Caco-2 (cell line): ENCODE measurements at regions of chr12 and their contacts with region 1.

Region 1: GRCh38 chr12:42744539-42745156 is 155.1 kb upstream of the PRICKLE1 start:
- DNase-seq: peak; percentile 43 to 64
- H3K4me3 ChIP-seq: no peak overlapping the region
- H3K4me3 Mint-ChIP-seq: no peak overlapping the region
- H3K27ac Mint-ChIP-seq: no peak overlapping the region
- H3K4me1 ChIP-seq: peaks cover 19% of the 10 kb centered on the region
- H3K4me1 Mint-ChIP-seq: peaks cover 9% of the 10 kb centered on the region
- H3K27me3 ChIP-seq: no peaks in the 10 kb centered on the region
- H3K27me3 Mint-ChIP-seq: no peaks in the 10 kb centered on the region
- CTCF ChIP-seq: no peak

Region 2: GRCh38 chr12:42450248-42450647 is 294.4 kb before region 1 on chr12:
- CTCF ChIA-PET with region 1: no interaction called
- POLR2A ChIA-PET with region 1: no interaction called
- intact Hi-C with region 1: no loop called
- DNase-seq: no peak
- H3K4me3 ChIP-seq: no peak overlapping the region
- H3K4me3 Mint-ChIP-seq: no peak overlapping the region
- H3K27ac Mint-ChIP-seq: no peak overlapping the region
- H3K4me1 ChIP-seq: peaks cover 10% of the 10 kb centered on the region; the same call in 1 of the 2 replicates
- H3K4me1 Mint-ChIP-seq: no peaks in the 10 kb centered on the region
- H3K27me3 ChIP-seq: no peaks in the 10 kb centered on the region
- H3K27me3 Mint-ChIP-seq: no peaks in the 10 kb centered on the region
- CTCF ChIP-seq: no peak

Region 3: GRCh38 chr12:42756841-42757661 is 12.4 kb after region 1 on chr12:
- CTCF ChIA-PET with region 1: no interaction called
- POLR2A ChIA-PET with region 1: no interaction called
- intact Hi-C with region 1: loop called (anchors 1 kb)
- DNase-seq: peak; percentile 71 to 82
- H3K4me3 ChIP-seq: no peak overlapping the region
- H3K4me3 Mint-ChIP-seq: peak overlapping the region; percentile 30
- H3K27ac Mint-ChIP-seq: peak overlapping the region; percentile 77
- H3K4me1 ChIP-seq: peaks cover 25% of the 10 kb centered on the region
- H3K4me1 Mint-ChIP-seq: peaks cover 16% of the 10 kb centered on the region
- H3K27me3 ChIP-seq: no peaks in the 10 kb centered on the region
- H3K27me3 Mint-ChIP-seq: no peaks in the 10 kb centered on the region
- CTCF ChIP-seq: no peak